Caco-2 (cell line): ENCODE measurements at regions of chr1 and their contacts with region 1.

Region 1: GRCh38 chr1:246497331-246497915 is 9.7 kb downstream of the SMYD3 start:
- DNase-seq: peak in 1 of 2 experiments; percentile 56
- H3K4me3 ChIP-seq: no peak overlapping the region
- H3K4me3 Mint-ChIP-seq: no peak overlapping the region
- H3K27ac Mint-ChIP-seq: no peak overlapping the region
- H3K4me1 ChIP-seq: no peaks in the 10 kb centered on the region
- H3K4me1 Mint-ChIP-seq: no peaks in the 10 kb centered on the region
- H3K27me3 ChIP-seq: no peaks in the 10 kb centered on the region
- H3K27me3 Mint-ChIP-seq: no peaks in the 10 kb centered on the region
- CTCF ChIP-seq: peak; percentile 54 to 81

Region 2: DNA sequence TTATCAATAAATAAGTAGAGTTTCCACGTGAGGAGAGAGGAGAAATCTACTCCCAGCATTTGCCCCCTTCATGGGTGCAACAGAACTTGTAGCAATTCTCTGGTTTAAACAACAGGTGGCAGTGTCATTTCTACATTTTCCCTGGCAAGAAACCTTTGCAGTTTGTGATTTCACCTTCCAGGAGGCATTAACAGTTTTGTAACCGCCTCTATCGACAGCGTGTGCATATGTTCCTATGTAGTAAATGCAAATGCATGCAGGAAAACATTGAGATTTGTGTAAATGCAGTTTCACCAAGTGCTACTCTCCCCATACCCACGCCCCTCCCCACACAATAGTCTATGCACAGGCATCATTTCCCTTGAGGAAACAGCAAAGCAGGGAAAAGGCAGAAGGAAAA is 485.1 kb before region 1 on chr1:
- CTCF ChIA-PET with region 1: no interaction called
- POLR2A ChIA-PET with region 1: no interaction called
- intact Hi-C with region 1: loop called (anchors 1 kb)
- DNase-seq: peak in 1 of 2 experiments; percentile 35
- H3K4me3 ChIP-seq: no peak overlapping the region
- H3K4me3 Mint-ChIP-seq: no peak overlapping the region
- H3K27ac Mint-ChIP-seq: no peak overlapping the region
- H3K4me1 ChIP-seq: no peaks in the 10 kb centered on the region
- H3K4me1 Mint-ChIP-seq: no peaks in the 10 kb centered on the region
- H3K27me3 ChIP-seq: no peaks in the 10 kb centered on the region
- H3K27me3 Mint-ChIP-seq: no peaks in the 10 kb centered on the region
- CTCF ChIP-seq: peak; percentile 55 to 61

Region 3: GRCh38 chr1:246450611-246451251 is 46.7 kb before region 1 on chr1:
- CTCF ChIA-PET with region 1: no interaction called
- POLR2A ChIA-PET with region 1: no interaction called
- intact Hi-C with region 1: loop called (anchors 1 kb)
- DNase-seq: peak in 1 of 2 experiments; percentile 2
- H3K4me3 ChIP-seq: no peak overlapping the region
- H3K4me3 Mint-ChIP-seq: no peak overlapping the region
- H3K27ac Mint-ChIP-seq: no peak overlapping the region
- H3K4me1 ChIP-seq: 0 out of 2 replicates have a peak, but pooled peaks cover 7% of the 10 kb centered on the region
- H3K4me1 Mint-ChIP-seq: peaks cover 6% of the 10 kb centered on the region
- H3K27me3 ChIP-seq: no peaks in the 10 kb centered on the region
- H3K27me3 Mint-ChIP-seq: no peaks in the 10 kb centered on the region
- CTCF ChIP-seq: peak; percentile 40 to 71

Region 4: GRCh38 chr1:246532519-246532918 is 35.1 kb after region 1 on chr1:
- CTCF ChIA-PET with region 1: interaction called, 5 read pairs
- POLR2A ChIA-PET with region 1: no interaction called
- intact Hi-C with region 1: loop called (anchors 1 kb)
- DNase-seq: no peak
- H3K4me3 ChIP-seq: no peak overlapping the region
- H3K4me3 Mint-ChIP-seq: no peak overlapping the region
- H3K27ac Mint-ChIP-seq: no peak overlapping the region
- H3K4me1 ChIP-seq: no peaks in the 10 kb centered on the region
- H3K4me1 Mint-ChIP-seq: no peaks in the 10 kb centered on the region
- H3K27me3 ChIP-seq: no peaks in the 10 kb centered on the region; the same call in 1 of the 2 replicates
- H3K27me3 Mint-ChIP-seq: peaks cover 5% of the 10 kb centered on the region
- CTCF ChIP-seq: peak in 1 of 2 experiments; percentile 13

Region 5: GRCh38 chr1:246689409-246690008 is 192.1 kb after region 1 on chr1:
- CTCF ChIA-PET with region 1: no interaction called
- POLR2A ChIA-PET with region 1: no interaction called
- intact Hi-C with region 1: loop called (anchors 2 kb)
- DNase-seq: peak; percentile 60 to 73
- H3K4me3 ChIP-seq: 0 out of 2 replicates have a peak overlapping the region, but pooled peaks have one; percentile 14
- H3K4me3 Mint-ChIP-seq: peak overlapping the region; percentile 14
- H3K27ac Mint-ChIP-seq: no peak overlapping the region
- H3K4me1 ChIP-seq: peaks cover 4% of the 10 kb centered on the region; the same call in 1 of the 2 replicates
- H3K4me1 Mint-ChIP-seq: no peaks in the 10 kb centered on the region
- H3K27me3 ChIP-seq: no peaks in the 10 kb centered on the region
- H3K27me3 Mint-ChIP-seq: no peaks in the 10 kb centered on the region
- CTCF ChIP-seq: peak; percentile 84 to 86

Region 6: GRCh38 chr1:246699095-246699735 is 201.8 kb after region 1 on chr1:
- CTCF ChIA-PET with region 1: no interaction called
- POLR2A ChIA-PET with region 1: no interaction called
- intact Hi-C with region 1: loop called (anchors 1 kb)
- DNase-seq: peak; percentile 83 to 86
- H3K4me3 ChIP-seq: peak overlapping the region; percentile 19
- H3K4me3 Mint-ChIP-seq: peak overlapping the region; percentile 58
- H3K27ac Mint-ChIP-seq: no peak overlapping the region
- H3K4me1 ChIP-seq: no peaks in the 10 kb centered on the region
- H3K4me1 Mint-ChIP-seq: peaks cover 7% of the 10 kb centered on the region
- H3K27me3 ChIP-seq: no peaks in the 10 kb centered on the region
- H3K27me3 Mint-ChIP-seq: no peaks in the 10 kb centered on the region
- CTCF ChIP-seq: peak; percentile 84 to 85

Region 7: GRCh38 chr1:246753670-246754535 is 256.5 kb after region 1 on chr1:
- CTCF ChIA-PET with region 1: interaction called, 3 read pairs
- POLR2A ChIA-PET with region 1: no interaction called
- intact Hi-C with region 1: loop called (anchors 1 kb)
- DNase-seq: peak; percentile 70 to 83
- H3K4me3 ChIP-seq: no peak overlapping the region
- H3K4me3 Mint-ChIP-seq: no peak overlapping the region
- H3K27ac Mint-ChIP-seq: no peak overlapping the region
- H3K4me1 ChIP-seq: 0 out of 2 replicates have a peak, but pooled peaks cover 3% of the 10 kb centered on the region
- H3K4me1 Mint-ChIP-seq: peaks cover 8% of the 10 kb centered on the region
- H3K27me3 ChIP-seq: no peaks in the 10 kb centered on the region
- H3K27me3 Mint-ChIP-seq: no peaks in the 10 kb centered on the region
- CTCF ChIP-seq: peak; percentile 82 to 85